Transverse colon (tissue), 4 donors: ENCODE measurements at regions of chr17 and their contacts with region 1.

Region 1: DNA sequence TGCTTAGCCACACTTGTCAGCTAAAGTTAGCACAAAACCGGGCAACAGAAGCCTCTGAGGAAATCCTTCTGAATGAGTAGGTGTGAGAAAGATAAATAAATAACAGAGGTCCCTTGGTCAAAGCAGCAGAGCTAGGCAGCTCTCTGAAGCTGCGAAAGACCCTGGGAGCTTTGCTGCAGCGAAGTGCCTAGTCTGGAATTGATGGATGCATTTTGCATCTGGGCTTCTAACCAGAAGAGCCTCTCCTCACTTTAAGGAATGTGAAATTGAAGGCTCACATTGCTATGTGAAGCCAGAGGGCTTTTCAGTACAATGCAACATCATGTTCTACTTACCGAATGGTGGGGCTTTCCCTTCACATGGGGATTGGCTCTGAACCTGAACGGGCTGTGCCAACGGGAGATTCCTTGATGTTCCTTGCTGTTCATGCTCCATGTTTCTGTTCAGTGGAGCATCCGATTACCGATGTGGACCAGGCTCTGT is 274.6 kb downstream of the HS3ST3B1 start:
- DNase-seq: no peak
- H3K4me3 ChIP-seq: no peak overlapping the region
- H3K27ac ChIP-seq: no peak overlapping the region
- H3K4me1 ChIP-seq: no peaks in the 10 kb centered on the region
- H3K27me3 ChIP-seq: no peaks in the 10 kb centered on the region
- CTCF ChIP-seq: no peak
- EP300 ChIP-seq: no peak
- POLR2A ChIP-seq: no peak

Region 2: GRCh38 chr17:14268264-14268663 is 307.2 kb before region 1 on chr17:
- in situ Hi-C with region 1: no loop called
- intact Hi-C with region 1: no loop called
- DNase-seq: no peak
- H3K4me3 ChIP-seq: no peak overlapping the region
- H3K27ac ChIP-seq: no peak overlapping the region
- H3K4me1 ChIP-seq: no peaks in the 10 kb centered on the region
- H3K27me3 ChIP-seq: no peaks in the 10 kb centered on the region
- CTCF ChIP-seq: no peak
- EP300 ChIP-seq: no peak
- POLR2A ChIP-seq: no peak

Region 3: GRCh38 chr17:14300575-14301278 is 274.8 kb before region 1 on chr17 and contains the start of gene HS3ST3B1:
- in situ Hi-C with region 1: no loop called
- intact Hi-C with region 1: no loop called
- DNase-seq: peak; percentile 94
- H3K4me3 ChIP-seq: peak within 1 kb of the TSS; percentile 26 to 62 (median 45)
- H3K27ac ChIP-seq: peak within 1 kb of the TSS; percentile 76 to 79 (median 77)
- H3K4me1 ChIP-seq: peaks cover 0 to 66% (median 41%) of the 10 kb centered on the region in 4 donors
- H3K27me3 ChIP-seq: peaks cover 96% of the 10 kb centered on the region
- CTCF ChIP-seq: peak in 3 of 5 experiments; percentile 12 to 55 (median 28)
- EP300 ChIP-seq: no peak
- POLR2A ChIP-seq: peak; percentile 83
- total RNA-seq, gene HS3ST3B1: 0.40 to 2.5 (median 1.2) TPM in 3 of 4 donors, not detected in the other

Region 4: DNA sequence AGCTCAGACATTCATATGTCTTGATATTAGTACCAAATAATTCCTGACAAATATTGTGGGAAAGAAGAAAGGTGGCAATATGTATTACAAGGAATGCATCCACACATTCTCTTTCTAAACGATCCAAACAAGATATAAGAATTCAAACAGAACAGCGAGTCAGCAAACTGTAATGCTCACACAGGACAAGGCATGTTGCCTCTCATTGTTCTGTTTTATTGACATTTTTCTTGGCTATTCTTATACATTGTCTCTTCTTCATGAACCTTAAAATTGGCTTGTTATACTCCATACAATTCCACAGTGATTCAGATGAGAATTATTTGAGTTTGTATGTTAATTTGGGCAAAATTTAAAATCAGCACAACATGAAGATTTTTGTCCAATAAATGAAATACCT is 85.5 kb before region 1 on chr17:
- in situ Hi-C with region 1: loop called in 1 of 4 experiments (anchors 25 kb)
- intact Hi-C with region 1: no loop called
- DNase-seq: no peak
- H3K4me3 ChIP-seq: no peak overlapping the region
- H3K27ac ChIP-seq: no peak overlapping the region
- H3K4me1 ChIP-seq: no peaks in the 10 kb centered on the region
- H3K27me3 ChIP-seq: no peaks in the 10 kb centered on the region
- CTCF ChIP-seq: no peak
- EP300 ChIP-seq: no peak
- POLR2A ChIP-seq: no peak

Region 5: DNA sequence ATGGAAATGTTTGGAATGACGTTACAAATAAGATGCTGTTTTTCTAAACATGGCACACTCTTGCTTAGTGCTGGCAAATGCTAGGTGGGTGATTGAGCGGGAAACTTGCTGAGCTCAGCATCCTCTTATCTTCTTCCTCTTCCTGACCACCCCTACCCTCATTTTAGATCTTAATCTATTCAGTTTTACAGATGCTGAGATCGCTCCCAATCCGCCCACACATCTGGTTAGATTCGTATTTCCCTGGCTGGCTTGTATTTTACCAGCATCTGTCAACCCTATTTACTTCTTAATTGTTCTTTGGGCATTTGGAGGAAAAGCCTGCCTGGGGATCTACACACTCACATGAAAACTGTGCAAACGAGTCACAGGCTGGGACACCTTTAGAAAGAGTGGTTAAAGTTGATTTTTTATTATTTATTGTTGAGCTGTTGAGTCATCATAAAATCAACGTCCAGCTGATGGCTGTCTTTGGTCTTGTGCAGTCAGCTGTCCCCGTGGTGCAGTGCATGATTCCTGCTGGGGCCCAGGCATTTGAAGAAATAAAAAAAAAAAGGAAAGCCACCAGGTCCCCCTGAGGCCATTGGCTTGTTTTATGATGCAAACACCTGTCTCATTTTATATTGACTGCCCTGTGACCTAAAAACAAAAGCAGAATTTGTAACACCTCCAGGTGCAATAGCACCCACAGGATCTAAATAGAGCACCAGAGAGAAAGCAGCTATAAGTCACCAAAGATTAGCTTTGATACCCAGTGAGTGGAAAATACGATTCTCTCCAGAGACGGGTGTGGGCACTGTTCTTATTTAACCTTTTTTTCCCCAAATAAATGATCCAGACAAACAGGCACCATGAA is 16.0 kb before region 1 on chr17:
- in situ Hi-C with region 1: no loop called
- intact Hi-C with region 1: no loop called
- DNase-seq: no peak
- H3K4me3 ChIP-seq: no peak overlapping the region
- H3K27ac ChIP-seq: no peak overlapping the region
- H3K4me1 ChIP-seq: no peaks in the 10 kb centered on the region
- H3K27me3 ChIP-seq: no peaks in the 10 kb centered on the region
- CTCF ChIP-seq: no peak
- EP300 ChIP-seq: no peak
- POLR2A ChIP-seq: no peak

Region 6: DNA sequence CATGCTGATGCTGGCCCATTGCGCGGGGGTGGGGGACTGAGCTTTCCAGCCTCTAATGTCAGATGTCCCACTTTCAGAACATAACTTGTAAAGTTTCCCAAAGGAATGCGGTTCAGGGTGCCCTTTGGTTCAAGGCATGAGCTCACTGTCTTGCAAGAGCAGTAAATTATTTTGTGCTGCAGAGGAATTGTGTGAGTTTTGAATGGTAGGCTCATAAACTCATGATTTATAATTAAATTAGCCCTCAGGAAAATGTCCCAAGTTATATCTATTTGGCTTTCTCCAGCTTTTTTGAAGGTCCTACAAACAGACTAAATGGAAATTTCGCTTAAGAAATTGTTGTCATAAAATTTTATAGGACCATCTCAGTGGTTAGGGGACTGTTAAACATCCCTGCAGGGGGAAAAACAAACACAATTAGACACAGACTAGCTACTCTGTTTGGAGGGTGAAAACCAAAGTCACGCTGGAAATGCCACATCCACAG is 47.1 kb after region 1 on chr17:
- in situ Hi-C with region 1: no loop called
- intact Hi-C with region 1: loop called (anchors 10 kb)
- DNase-seq: no peak
- H3K4me3 ChIP-seq: no peak overlapping the region
- H3K27ac ChIP-seq: no peak overlapping the region
- H3K4me1 ChIP-seq: no peaks in the 10 kb centered on the region
- H3K27me3 ChIP-seq: no peaks in the 10 kb centered on the region
- CTCF ChIP-seq: no peak
- EP300 ChIP-seq: no peak
- POLR2A ChIP-seq: no peak